Psoas muscle (tissue), 8 donors: ENCODE measurements at regions of chr10 and their contacts with region 1.

Region 1: GRCh38 chr10:15824498-15824897 is 35.8 kb downstream of the MINDY3 start:
- DNase-seq: no peak
- ATAC-seq: no peak
- H3K4me3 ChIP-seq: no peak overlapping the region
- H3K27ac ChIP-seq: no peak overlapping the region
- H3K4me1 ChIP-seq: no peaks in the 10 kb centered on the region
- H3K27me3 ChIP-seq: no peaks in the 10 kb centered on the region
- CTCF ChIP-seq: peak; percentile 62

Region 2: DNA sequence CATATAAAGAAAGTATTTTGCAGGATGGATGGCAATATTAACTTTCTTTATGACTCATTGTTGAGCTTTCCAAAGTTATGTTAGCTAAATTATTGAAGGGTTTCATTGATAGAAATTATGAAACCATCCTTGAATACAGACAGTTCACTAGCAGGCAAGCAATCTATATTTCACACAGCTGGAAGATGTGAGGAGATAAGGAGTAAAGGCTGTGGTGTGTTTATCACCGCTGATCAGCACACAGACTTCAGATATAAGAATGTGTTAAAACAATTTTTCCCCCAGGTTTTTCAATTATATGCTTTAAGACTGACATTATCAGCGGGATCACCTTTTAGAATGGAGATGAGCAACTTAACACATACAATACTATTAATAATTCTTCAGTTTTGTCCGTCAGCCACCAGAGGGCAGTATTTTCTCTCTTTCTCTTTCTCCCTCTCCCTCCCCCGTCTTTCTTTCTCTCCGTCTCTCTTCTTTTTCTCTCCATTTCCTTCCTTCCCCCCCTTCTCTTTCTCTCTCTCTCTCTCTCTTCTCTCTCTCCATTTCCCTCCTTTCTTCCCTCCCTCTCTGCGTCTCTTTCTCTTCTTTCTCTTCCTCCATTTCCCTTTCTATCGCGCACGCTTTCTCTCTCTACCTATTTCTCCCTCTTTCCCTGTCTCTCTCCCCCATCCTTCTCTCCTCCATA is 390.5 kb before region 1 on chr10:
- intact Hi-C with region 1: loop called (anchors 5 to 10 kb)
- DNase-seq: no peak
- ATAC-seq: peak in 3 of 4 donors; percentile 46 to 77 (median 67)
- H3K4me3 ChIP-seq: peak overlapping the region; percentile 51
- H3K27ac ChIP-seq: no peak overlapping the region
- H3K4me1 ChIP-seq: no peaks in the 10 kb centered on the region
- H3K27me3 ChIP-seq: no peaks in the 10 kb centered on the region
- CTCF ChIP-seq: peak; percentile 75

Region 3: GRCh38 chr10:15585303-15585715 is 239.2 kb before region 1 on chr10:
- intact Hi-C with region 1: loop called in 1 of 2 experiments (anchors 10 kb)
- DNase-seq: peak; percentile 39 to 58
- ATAC-seq: peak in 2 of 4 donors; percentile 54 to 61
- H3K4me3 ChIP-seq: no peak overlapping the region
- H3K27ac ChIP-seq: no peak overlapping the region
- H3K4me1 ChIP-seq: no peaks in the 10 kb centered on the region
- H3K27me3 ChIP-seq: no peaks in the 10 kb centered on the region
- CTCF ChIP-seq: peak; percentile 54

Region 4: GRCh38 chr10:15719899-15720634 is 104.4 kb before region 1 on chr10 and contains the start of gene ITGA8:
- intact Hi-C with region 1: loop called in 1 of 2 experiments (anchors 5 kb)
- DNase-seq: peak in 1 of 2 donors; percentile 55
- ATAC-seq: peak in 2 of 4 donors; percentile 67 to 74
- H3K4me3 ChIP-seq: peak within 1 kb of the TSS; percentile 62
- H3K27ac ChIP-seq: no peak within 1 kb of the TSS
- H3K4me1 ChIP-seq: no peaks in the 10 kb centered on the region
- H3K27me3 ChIP-seq: peaks cover 0 to 33% (median 0%) of the 10 kb centered on the region in 3 donors
- CTCF ChIP-seq: peak; percentile 23
- total RNA-seq, gene ITGA8: 0.47 to 2.0 (median 1.4) TPM